ENCODE measurements at regions of chr2 and their contacts with region 1.

Region 1: DNA sequence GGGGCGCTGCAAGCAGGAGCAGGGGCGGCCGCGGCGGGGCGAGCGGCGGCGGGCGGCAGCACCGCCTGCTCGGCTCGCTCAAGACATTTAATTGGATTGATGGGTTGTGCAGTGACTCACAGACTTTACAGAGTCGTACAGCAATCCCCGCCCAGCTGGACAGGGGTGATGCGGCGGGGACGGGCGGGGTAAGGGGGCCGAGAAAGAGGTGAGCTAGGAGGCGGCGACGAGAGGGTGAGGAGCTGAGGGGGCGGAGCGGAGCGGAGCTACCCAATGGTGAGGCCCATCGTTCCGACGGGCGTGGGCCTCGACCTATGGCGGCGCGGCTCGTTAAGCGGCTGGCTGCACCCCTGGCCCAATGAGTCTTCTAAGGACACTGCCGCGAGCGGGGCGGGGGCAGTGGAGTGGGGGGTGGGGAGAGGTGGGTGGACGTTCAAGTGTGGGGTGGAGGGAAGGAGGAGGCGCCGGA is 97.1 kb upstream of the SERTAD2 start:
- DNase-seq: peak; percentile 97
- ATAC-seq: peak; percentile 94
- H3K4me3 Mint-ChIP-seq: peak overlapping the region; percentile 96
- H3K27ac Mint-ChIP-seq: peak overlapping the region; percentile 97
- H3K4me1 Mint-ChIP-seq: peaks cover 15% of the 10 kb centered on the region
- H3K27me3 Mint-ChIP-seq: peaks cover 23% of the 10 kb centered on the region
- CTCF ChIP-seq: no peak

Region 2: DNA sequence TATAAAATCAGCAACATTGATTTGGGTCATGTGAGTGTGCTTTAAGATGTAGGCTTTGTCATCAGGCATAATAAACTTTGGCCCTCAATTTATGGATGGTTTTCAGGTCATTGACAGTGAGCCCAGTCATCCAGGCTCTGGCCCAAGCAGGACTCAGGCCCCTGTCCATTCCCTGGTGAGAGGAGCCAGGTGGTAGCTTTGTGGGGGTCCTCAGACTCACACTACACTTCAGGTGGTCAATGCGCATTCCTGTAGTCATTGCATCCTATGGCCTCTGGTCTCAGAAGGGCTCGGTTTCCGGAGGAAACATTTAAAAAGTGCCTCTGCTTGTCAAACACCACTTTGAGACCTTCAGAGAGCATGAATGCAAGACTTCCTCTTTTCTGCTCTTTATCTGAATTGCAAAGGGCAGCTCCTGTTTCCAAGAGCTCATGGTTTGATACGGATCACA is 276.7 kb before region 1 on chr2:
- CTCF ChIA-PET with region 1: no interaction called
- POLR2A ChIA-PET with region 1: no interaction called
- DNase-seq: no peak
- ATAC-seq: peak; percentile 54
- H3K4me3 Mint-ChIP-seq: no peak overlapping the region
- H3K27ac Mint-ChIP-seq: peak overlapping the region; percentile 81
- H3K4me1 Mint-ChIP-seq: peaks cover 32% of the 10 kb centered on the region
- H3K27me3 Mint-ChIP-seq: no peaks in the 10 kb centered on the region
- CTCF ChIP-seq: no peak

Region 3: DNA sequence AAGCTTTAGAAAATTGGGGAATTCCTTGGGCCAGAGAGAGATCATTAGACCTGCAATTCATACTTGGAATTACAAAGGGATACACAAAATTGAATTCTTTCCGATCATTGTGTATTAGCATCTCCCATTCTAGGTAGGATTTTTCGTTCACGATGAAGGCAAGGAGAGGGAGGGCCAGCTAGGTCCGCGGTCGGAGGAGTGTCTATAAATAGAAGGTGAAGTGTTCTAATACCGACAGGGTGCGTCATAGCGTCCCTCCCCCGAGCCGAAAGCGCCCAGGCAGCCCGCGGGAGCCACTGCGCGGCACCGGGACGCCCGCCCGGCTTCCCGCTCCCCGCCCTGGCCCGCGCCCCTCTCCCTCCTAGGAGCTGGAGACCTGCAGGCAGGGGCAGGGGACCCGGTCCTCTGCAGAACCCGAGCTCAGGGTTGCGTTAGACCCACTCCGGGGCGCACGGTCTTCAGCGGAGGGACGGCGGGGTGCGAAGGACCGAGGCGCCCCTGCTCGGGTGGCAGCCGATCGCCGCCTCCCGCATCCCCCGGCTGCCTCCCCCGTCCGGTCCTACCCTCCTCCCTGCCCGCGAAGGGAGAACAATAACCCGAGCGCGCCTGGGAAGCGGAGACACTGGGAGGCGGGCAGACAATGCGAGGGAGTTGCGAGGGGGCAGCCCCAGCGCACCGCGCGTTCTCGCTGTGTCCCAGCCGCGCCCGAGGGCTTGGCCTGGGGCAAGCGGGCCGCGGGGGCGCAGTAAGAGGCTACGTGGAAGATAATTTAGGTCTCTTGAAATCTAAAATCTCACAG is 17.0 kb after region 1 on chr2:
- CTCF ChIA-PET with region 1: interaction called, 12 read pairs
- POLR2A ChIA-PET with region 1: interaction called, 8 read pairs
- DNase-seq: peak; percentile 76
- ATAC-seq: peak; percentile 89
- H3K4me3 Mint-ChIP-seq: peak overlapping the region; percentile 94
- H3K27ac Mint-ChIP-seq: no peak overlapping the region
- H3K4me1 Mint-ChIP-seq: peaks cover 23% of the 10 kb centered on the region
- H3K27me3 Mint-ChIP-seq: peaks cover 59% of the 10 kb centered on the region
- CTCF ChIP-seq: no peak

Region 4: DNA sequence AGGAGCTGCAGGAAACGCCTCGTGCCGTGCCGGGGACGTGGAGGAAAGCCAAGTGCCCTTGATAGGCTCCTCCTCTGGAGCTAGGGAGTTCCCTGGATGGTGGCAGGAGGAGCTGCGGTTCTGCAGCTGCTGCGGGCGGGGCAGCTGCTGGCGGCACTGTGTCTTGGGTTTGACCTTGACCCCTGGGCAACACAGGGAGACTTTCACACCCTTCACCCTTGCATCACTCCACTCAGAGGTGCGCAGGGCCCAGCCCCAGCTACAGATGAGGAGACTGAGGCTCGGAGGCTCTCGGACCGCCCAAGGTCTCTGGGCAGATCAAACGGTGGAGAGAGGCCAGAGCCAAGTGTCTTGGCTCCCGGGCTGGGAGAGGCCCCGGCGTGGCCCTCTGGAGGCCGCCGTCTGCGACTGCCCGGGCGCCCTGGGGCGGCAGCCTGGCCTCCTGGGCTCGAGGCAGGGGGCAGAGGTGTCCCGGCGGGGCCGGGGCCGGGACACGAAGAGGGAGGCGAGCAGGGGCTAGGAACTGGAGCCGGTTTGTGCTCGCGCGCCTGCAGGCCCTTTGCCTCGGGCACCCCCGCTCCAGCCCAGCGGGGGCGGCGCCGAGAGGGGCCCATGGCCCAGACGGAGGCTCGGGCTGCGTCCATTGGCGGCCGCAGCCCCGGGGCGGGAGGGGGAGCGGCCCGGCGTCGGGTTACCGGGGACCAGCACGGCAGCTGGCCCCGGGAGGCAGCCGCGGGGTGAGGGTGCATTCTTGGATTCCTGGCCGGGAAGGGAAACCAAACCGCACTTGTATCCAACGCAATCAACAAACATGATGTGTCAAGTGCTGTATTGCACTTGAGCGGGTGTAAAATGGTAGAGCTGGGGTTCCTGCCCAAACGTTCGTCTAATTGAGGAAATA is 108.7 kb after region 1 on chr2:
- CTCF ChIA-PET with region 1: interaction called, 11 read pairs
- POLR2A ChIA-PET with region 1: interaction called, 3 read pairs
- DNase-seq: peak; percentile 72
- ATAC-seq: peak; percentile 71
- H3K4me3 Mint-ChIP-seq: peak overlapping the region; percentile 72
- H3K27ac Mint-ChIP-seq: no peak overlapping the region
- H3K4me1 Mint-ChIP-seq: peaks cover 20% of the 10 kb centered on the region
- H3K27me3 Mint-ChIP-seq: peaks cover 27% of the 10 kb centered on the region
- CTCF ChIP-seq: no peak